CD8-positive, alpha-beta T cell (primary cell): ENCODE measurements at regions of chr20 and their contacts with region 1.

Region 1: DNA sequence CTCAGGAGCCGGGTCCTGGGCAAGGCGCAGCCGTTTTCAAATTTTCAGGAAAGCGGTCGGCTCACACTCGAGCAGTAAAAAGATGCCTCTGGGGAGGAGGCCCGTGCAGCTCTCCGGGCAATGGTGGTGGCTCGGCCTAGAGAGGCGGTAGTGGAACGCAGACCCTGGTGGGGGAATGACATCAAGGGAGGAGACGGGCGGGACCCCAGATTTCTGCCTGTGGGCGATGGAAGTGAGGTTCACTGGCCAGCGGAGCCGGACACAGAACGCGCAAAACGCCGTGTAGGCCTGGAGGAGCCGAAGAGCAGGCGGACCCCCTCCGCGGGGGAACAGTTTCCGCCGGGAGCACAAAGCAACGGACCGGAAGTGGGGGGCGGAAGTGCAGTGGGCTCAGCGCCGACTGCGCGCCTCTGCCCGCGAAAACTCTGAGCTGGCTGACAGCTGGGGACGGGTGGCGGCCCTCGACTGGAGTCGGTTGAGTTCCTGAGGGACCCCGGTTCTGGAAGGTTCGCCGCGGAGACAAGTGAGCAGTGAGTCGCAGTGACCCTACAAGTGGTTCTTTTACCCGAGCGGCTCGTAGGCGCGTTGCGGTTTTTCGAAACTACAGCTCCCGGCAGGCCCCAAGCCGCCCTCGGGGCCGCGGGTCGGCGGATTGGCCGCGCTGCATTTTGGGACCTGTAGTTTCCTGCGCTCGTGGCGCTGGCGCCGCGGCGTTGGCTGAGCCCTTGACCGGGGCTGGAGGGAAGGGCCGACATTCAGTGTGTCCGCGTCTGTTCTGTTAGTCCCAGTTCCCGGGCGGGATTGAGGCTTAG is at the start of gene RTEL1:
- DNase-seq: peak; percentile 81 to 97 (median 88)
- ATAC-seq: peak; percentile 83
- H3K4me3 ChIP-seq: peak within 1 kb of the TSS; percentile 76 to 97
- H3K4me3 Mint-ChIP-seq: peak within 1 kb of the TSS; percentile 93
- H3K27ac ChIP-seq: peak within 1 kb of the TSS; percentile 72 to 75
- H3K27ac Mint-ChIP-seq: peak within 1 kb of the TSS; percentile 91
- H3K4me1 ChIP-seq: peaks cover 35% of the 10 kb centered on the region
- H3K4me1 Mint-ChIP-seq: peaks cover 36% of the 10 kb centered on the region
- H3K27me3 ChIP-seq: no peaks in the 10 kb centered on the region
- H3K27me3 Mint-ChIP-seq: no peaks in the 10 kb centered on the region
- CTCF ChIP-seq: no peak
- total RNA-seq, gene RTEL1: 21.4 to 24.9 TPM

Region 2: GRCh38 chr20:63520504-63520933 is 137.6 kb before region 1 on chr20 and contains the start of gene PPDPF:
- CTCF ChIA-PET with region 1: no interaction called
- POLR2A ChIA-PET with region 1: interaction called, 3 read pairs
- intact Hi-C with region 1: loop called in 1 of 2 experiments (anchors 1 kb)
- DNase-seq: peak; percentile 74 to 94 (median 85)
- ATAC-seq: peak; percentile 89
- H3K4me3 ChIP-seq: peak within 1 kb of the TSS; percentile 67 to 76
- H3K4me3 Mint-ChIP-seq: peak within 1 kb of the TSS; percentile 85
- H3K27ac ChIP-seq: peak within 1 kb of the TSS; percentile 54 to 85
- H3K27ac Mint-ChIP-seq: peak within 1 kb of the TSS; percentile 87
- H3K4me1 ChIP-seq: peaks cover 21% of the 10 kb centered on the region
- H3K4me1 Mint-ChIP-seq: peaks cover 14% of the 10 kb centered on the region
- H3K27me3 ChIP-seq: no peaks in the 10 kb centered on the region
- H3K27me3 Mint-ChIP-seq: no peaks in the 10 kb centered on the region
- CTCF ChIP-seq: no peak
- total RNA-seq, gene PPDPF: 284 to 287 TPM

Region 3: GRCh38 chr20:63627129-63627750 is 30.9 kb before region 1 on chr20:
- CTCF ChIA-PET with region 1: interaction called, 4 read pairs
- POLR2A ChIA-PET with region 1: interaction called, 14 read pairs
- intact Hi-C with region 1: loop called (anchors 1 kb)
- DNase-seq: peak; percentile 90 to 97 (median 94)
- ATAC-seq: peak; percentile 77
- H3K4me3 ChIP-seq: peak overlapping the region; percentile 91 to 100
- H3K4me3 Mint-ChIP-seq: peak overlapping the region; percentile 97
- H3K27ac ChIP-seq: peak overlapping the region; percentile 81 to 91
- H3K27ac Mint-ChIP-seq: peak overlapping the region; percentile 93
- H3K4me1 ChIP-seq: peaks cover 39% of the 10 kb centered on the region
- H3K4me1 Mint-ChIP-seq: peaks cover 43% of the 10 kb centered on the region
- H3K27me3 ChIP-seq: no peaks in the 10 kb centered on the region
- H3K27me3 Mint-ChIP-seq: no peaks in the 10 kb centered on the region
- CTCF ChIP-seq: no peak

Region 4: GRCh38 chr20:63739130-63740069 is 81.3 kb after region 1 on chr20 and contains the start of gene SLC2A4RG:
- CTCF ChIA-PET with region 1: no interaction called
- POLR2A ChIA-PET with region 1: interaction called, 10 read pairs
- intact Hi-C with region 1: loop called (anchors 5 kb)
- DNase-seq: peak; percentile 37 to 88 (median 66)
- ATAC-seq: peak; percentile 17
- H3K4me3 ChIP-seq: peak within 1 kb of the TSS; percentile 80 to 94
- H3K4me3 Mint-ChIP-seq: peak within 1 kb of the TSS; percentile 92
- H3K27ac ChIP-seq: peak within 1 kb of the TSS; percentile 40 to 48
- H3K27ac Mint-ChIP-seq: no peak within 1 kb of the TSS
- H3K4me1 ChIP-seq: peaks cover 41% of the 10 kb centered on the region
- H3K4me1 Mint-ChIP-seq: peaks cover 16% of the 10 kb centered on the region
- H3K27me3 ChIP-seq: no peaks in the 10 kb centered on the region
- H3K27me3 Mint-ChIP-seq: no peaks in the 10 kb centered on the region
- CTCF ChIP-seq: no peak
- total RNA-seq, gene SLC2A4RG: 79.3 to 90.0 TPM

Region 5: DNA sequence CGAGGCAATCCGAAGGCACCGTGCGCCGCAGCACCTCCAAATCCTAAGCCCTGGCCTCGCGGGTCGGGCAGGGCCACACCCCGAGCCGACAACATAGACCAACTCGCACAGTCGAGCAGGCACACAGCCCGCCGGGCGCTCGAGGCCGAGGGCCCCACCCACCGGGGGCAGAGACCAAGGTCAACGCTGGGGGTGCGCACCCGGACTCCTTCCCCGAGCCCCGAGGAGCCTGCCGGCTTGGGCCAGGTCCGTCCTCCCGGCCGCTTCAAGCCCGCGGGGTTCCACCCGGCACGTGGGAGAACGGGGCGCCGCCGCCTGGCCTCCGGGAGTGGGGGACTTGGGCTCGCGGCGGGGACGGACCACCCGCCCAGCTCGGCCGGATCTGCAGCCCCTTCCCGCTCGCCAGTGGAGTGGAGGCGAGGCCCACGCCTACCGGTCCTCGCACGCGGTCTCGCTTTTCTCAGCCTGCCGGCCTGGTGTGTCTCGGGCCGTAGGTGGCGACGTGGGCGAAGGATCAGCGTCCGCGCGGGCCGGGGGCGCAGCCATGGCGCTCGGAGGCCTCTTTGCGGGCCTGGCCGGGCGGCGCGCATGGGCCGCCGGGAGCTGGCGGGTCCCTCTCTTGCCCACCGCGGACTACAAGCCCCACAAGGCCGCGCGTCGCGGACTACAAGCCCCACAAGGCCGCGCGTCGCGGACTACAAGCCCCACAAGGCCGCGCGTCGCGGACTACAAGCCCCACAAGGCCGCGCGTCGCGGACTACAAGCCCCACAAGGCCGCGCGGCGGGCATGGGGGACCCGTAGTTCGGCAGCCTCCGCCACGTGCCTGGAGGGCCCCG is 297.9 kb after region 1 on chr20 and contains the start of gene UCKL1:
- CTCF ChIA-PET with region 1: no interaction called
- POLR2A ChIA-PET with region 1: no interaction called
- intact Hi-C with region 1: loop called in 1 of 2 experiments (anchors 1 kb)
- DNase-seq: peak; percentile 78 to 93 (median 89)
- ATAC-seq: peak; percentile 81
- H3K4me3 ChIP-seq: peak within 1 kb of the TSS; percentile 73 to 95
- H3K4me3 Mint-ChIP-seq: peak within 1 kb of the TSS; percentile 82
- H3K27ac ChIP-seq: peak within 1 kb of the TSS; percentile 64 to 77
- H3K27ac Mint-ChIP-seq: peak within 1 kb of the TSS; percentile 76
- H3K4me1 ChIP-seq: peaks cover 28% of the 10 kb centered on the region
- H3K4me1 Mint-ChIP-seq: peaks cover 34% of the 10 kb centered on the region
- H3K27me3 ChIP-seq: no peaks in the 10 kb centered on the region
- H3K27me3 Mint-ChIP-seq: no peaks in the 10 kb centered on the region
- CTCF ChIP-seq: no peak
- total RNA-seq, gene UCKL1: 29.6 to 33.7 TPM

Region 6: GRCh38 chr20:64255361-64256281 is 597.5 kb after region 1 on chr20 and contains the start of gene PCMTD2:
- CTCF ChIA-PET with region 1: no interaction called
- POLR2A ChIA-PET with region 1: no interaction called
- intact Hi-C with region 1: loop called in 1 of 2 experiments (anchors 5 kb)
- DNase-seq: peak; percentile 62 to 95 (median 87)
- ATAC-seq: peak; percentile 84
- H3K4me3 ChIP-seq: peak within 1 kb of the TSS; percentile 71 to 82
- H3K4me3 Mint-ChIP-seq: peak within 1 kb of the TSS; percentile 89
- H3K27ac ChIP-seq: peak within 1 kb of the TSS; percentile 70 to 72
- H3K27ac Mint-ChIP-seq: peak within 1 kb of the TSS; percentile 94
- H3K4me1 ChIP-seq: peaks cover 52% of the 10 kb centered on the region
- H3K4me1 Mint-ChIP-seq: peaks cover 52% of the 10 kb centered on the region
- H3K27me3 ChIP-seq: peaks cover 0 to 4% of the 10 kb centered on the region in 2 experiments
- H3K27me3 Mint-ChIP-seq: peaks cover 10% of the 10 kb centered on the region
- CTCF ChIP-seq: no peak
- total RNA-seq, gene PCMTD2: 56.3 to 64.1 TPM